Activated T-helper 1 cell treated with anti-CD3 and anti-CD28 coated beads, Interleukin-12 subunit alpha, Interleukin-12 subunit beta, Interleukin-2, Interleukin-4 antibody, amounts not matched to agents 30 ng/mL and 10 ng/mL and 1 ng/mL, durations not matched to agents 14 hours and 24 hours and 36 hours (primary cell): ENCODE measurements at regions of chr6 and their contacts with region 1.

Region 1: DNA sequence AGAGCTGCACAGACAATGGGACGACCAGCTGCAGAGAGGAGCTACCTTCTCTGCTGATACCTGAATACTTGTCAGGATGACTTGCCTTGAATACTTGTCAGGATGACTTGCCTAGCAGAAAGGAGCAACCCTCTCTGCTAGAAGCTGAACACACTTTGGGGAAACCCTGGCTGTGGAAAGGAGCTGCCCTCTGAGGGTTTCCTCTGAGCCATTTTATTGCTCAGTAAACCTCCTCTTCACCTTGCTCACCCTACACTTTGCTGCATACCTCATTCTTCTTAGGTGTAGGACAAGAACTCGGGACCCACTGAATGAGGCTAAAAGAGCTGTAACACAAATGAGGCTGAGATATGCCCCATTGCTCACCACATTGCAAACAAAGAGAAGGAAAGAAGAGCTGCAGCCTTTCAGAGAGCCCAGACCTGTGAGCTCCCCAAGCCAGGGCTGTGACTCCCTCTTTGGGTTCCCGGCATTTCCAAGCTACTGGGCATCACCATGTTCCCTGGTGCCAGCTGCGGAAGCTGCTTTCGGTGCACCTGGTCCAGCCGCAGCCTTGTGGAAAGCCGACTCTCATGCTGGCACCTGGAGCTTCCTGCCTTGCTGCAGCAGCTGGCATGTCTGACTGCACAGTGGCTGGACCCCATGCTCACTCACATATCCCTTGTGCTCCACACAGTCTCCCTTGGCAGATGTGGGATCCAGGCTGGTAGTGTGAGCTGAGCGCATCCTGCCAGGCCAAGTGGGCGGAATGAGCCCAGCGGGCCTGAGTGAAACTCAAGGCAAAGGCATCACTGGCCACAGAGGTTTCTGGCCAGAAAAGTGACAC is 106.7 kb upstream of the AHI1 start:
- DNase-seq: no peak
- H3K4me3 Mint-ChIP-seq: no peak overlapping the region
- H3K27ac Mint-ChIP-seq: peak overlapping the region; percentile 90
- H3K4me1 Mint-ChIP-seq: peaks cover 46% of the 10 kb centered on the region
- H3K27me3 Mint-ChIP-seq: no peaks in the 10 kb centered on the region

Region 2: GRCh38 chr6:135527116-135527959 is 76.9 kb before region 1 on chr6:
- intact Hi-C with region 1: no loop called
- DNase-seq: no peak
- H3K4me3 Mint-ChIP-seq: no peak overlapping the region
- H3K27ac Mint-ChIP-seq: no peak overlapping the region
- H3K4me1 Mint-ChIP-seq: peaks cover 9% of the 10 kb centered on the region
- H3K27me3 Mint-ChIP-seq: no peaks in the 10 kb centered on the region

Region 3: DNA sequence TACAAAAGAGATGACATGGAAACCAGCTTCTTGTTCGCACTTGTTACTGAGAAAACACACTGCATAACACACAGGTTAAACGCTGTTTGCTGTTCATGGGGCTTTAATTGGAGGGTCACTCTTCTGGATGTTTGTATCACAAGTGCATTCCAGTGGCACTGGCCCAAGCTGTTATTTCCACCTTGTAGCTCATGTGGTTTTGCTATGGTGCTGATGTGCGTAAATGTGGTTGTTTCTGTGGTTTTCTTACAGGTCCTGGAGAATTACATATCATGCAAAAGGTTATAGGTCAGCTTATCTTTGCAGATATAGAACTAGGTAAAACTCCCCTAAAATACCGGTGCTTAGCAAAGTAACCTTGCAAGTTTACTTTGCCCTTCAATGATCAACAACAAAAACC is 17.4 kb before region 1 on chr6:
- intact Hi-C with region 1: loop called (anchors 2 kb)
- DNase-seq: peak; percentile 38
- H3K4me3 Mint-ChIP-seq: peak overlapping the region; percentile 27
- H3K27ac Mint-ChIP-seq: peak overlapping the region; percentile 88
- H3K4me1 Mint-ChIP-seq: peaks cover 74% of the 10 kb centered on the region
- H3K27me3 Mint-ChIP-seq: no peaks in the 10 kb centered on the region

Region 4: DNA sequence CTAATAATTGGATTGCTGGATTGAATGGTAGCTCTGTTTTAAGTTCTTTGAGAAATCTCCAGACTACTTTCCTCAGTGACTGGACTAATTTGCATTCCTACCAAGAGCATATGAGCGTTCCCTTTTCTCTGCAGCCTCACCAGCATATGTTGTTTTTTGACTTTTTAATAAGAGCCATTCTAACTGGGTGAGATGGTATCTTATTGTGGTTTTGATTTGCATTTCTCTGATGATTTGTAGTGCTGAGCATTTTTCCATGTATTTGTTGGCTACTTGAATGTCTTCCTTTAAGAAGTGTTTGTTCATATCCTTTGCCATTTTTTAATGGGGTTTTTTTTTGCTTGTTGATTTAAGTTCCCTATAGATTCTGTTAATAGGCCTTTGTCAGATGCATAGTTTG is 12.0 kb before region 1 on chr6:
- intact Hi-C with region 1: loop called (anchors 2 kb)
- DNase-seq: no peak
- H3K4me3 Mint-ChIP-seq: no peak overlapping the region
- H3K27ac Mint-ChIP-seq: peak overlapping the region; percentile 79
- H3K4me1 Mint-ChIP-seq: peaks cover 49% of the 10 kb centered on the region
- H3K27me3 Mint-ChIP-seq: no peaks in the 10 kb centered on the region

Region 5: GRCh38 chr6:135630789-135631376 is 26.6 kb after region 1 on chr6:
- intact Hi-C with region 1: no loop called
- DNase-seq: no peak
- H3K4me3 Mint-ChIP-seq: no peak overlapping the region
- H3K27ac Mint-ChIP-seq: peak overlapping the region; percentile 23
- H3K4me1 Mint-ChIP-seq: peaks cover 52% of the 10 kb centered on the region
- H3K27me3 Mint-ChIP-seq: no peaks in the 10 kb centered on the region

Region 6: DNA sequence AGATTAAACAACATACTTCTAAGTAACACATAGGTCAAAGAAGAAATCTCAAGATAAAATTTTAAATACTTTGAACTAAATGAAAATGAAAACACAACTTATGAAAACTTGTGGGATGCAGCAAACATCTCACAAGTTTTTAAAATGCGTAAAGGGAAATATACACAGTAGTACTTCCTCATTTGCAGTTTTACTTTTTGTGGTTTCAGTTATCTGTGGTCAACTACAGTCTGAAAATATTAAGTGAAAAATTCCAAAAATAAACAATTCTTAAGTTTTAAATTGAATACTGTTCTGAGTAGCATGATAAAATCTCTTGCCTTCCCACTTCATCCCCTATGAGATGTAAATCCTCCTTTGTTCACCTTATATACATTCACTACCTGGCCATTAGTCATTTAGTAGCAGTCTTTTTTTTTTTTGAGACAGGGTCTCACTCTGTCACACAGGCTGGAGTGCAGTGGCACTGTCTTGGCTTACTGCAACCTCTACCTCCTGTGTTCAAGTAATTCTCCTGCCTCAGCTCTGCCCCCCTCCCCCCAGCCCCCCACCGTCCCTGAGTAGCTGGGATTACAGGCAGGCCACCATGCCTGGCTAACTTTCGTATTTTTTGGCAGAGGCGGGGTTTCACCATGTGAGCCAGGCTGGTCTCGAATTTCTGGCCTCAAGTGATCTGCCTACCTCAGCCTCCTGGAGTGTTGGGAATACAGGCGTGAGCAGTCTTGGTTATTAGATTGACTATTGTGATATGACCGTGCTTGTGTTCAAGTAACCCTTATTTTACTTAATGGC is 47.9 kb after region 1 on chr6:
- intact Hi-C with region 1: loop called (anchors 1 kb)
- DNase-seq: no peak
- H3K4me3 Mint-ChIP-seq: peak overlapping the region; percentile 57
- H3K27ac Mint-ChIP-seq: peak overlapping the region; percentile 91
- H3K4me1 Mint-ChIP-seq: peaks cover 44% of the 10 kb centered on the region
- H3K27me3 Mint-ChIP-seq: no peaks in the 10 kb centered on the region